ENCODE measurements at regions of chr16 and their contacts with region 1.

Region 1: GRCh38 chr16:71564155-71564967 is 12.5 kb downstream of the TAT start:
- DNase-seq: no peak
- ATAC-seq: no peak
- H3K4me3 Mint-ChIP-seq: peak overlapping the region; percentile 87
- H3K27ac Mint-ChIP-seq: peak overlapping the region; percentile 98
- H3K4me1 Mint-ChIP-seq: peaks cover 15% of the 10 kb centered on the region
- H3K27me3 Mint-ChIP-seq: no peaks in the 10 kb centered on the region

Region 2: GRCh38 chr16:71288890-71289733 is 275.2 kb before region 1 on chr16 and contains the start of gene CMTR2:
- CTCF ChIA-PET with region 1: no interaction called
- POLR2A ChIA-PET with region 1: no interaction called
- intact Hi-C with region 1: loop called in 1 of 2 experiments (anchors 2 kb)
- DNase-seq: peak; percentile 95
- ATAC-seq: peak; percentile 97
- H3K4me3 Mint-ChIP-seq: peak within 1 kb of the TSS; percentile 83
- H3K27ac Mint-ChIP-seq: peak within 1 kb of the TSS; percentile 90
- H3K4me1 Mint-ChIP-seq: peaks cover 15% of the 10 kb centered on the region
- H3K27me3 Mint-ChIP-seq: peaks cover 16% of the 10 kb centered on the region
- total RNA-seq, gene CMTR2: 15.8 to 16.5 TPM

Region 3: DNA sequence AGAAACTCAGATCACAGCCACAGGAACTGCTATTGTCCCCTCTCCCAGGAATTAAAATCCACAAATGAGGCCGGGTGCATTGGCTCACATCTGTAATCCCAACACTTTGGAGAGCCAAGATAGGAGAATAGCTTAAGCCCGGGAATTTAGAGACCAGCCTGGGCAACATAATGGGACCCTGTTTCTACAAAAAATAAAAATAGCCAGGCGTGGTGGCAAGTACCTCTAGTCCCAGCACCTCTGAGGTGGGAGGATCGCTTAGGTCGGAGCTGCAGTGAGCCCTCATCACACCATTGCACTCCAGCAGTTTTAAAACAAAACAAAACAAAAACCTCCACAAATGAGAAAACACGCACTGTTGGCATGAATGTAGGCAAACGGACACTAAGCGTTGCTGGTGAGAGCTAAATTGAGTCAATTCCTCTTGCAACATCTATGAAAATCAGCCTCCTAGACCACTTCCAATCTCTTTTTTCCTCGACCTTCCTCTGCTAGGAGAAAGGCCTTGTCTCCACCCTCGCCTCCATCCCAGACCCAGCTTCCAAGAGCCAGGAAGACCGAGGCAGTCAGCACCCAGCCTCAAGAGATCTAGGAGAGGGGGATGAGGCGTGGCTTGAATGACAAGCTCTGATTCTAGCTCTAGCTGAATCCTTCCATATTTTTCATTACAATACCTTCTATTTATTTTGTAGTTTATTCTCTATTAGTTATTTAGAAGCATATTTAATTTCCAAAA is 137.3 kb before region 1 on chr16:
- CTCF ChIA-PET with region 1: no interaction called
- POLR2A ChIA-PET with region 1: no interaction called
- intact Hi-C with region 1: no loop called
- DNase-seq: no peak
- ATAC-seq: no peak
- H3K4me3 Mint-ChIP-seq: no peak overlapping the region
- H3K27ac Mint-ChIP-seq: no peak overlapping the region
- H3K4me1 Mint-ChIP-seq: no peaks in the 10 kb centered on the region
- H3K27me3 Mint-ChIP-seq: peaks cover 39% of the 10 kb centered on the region

Region 4: DNA sequence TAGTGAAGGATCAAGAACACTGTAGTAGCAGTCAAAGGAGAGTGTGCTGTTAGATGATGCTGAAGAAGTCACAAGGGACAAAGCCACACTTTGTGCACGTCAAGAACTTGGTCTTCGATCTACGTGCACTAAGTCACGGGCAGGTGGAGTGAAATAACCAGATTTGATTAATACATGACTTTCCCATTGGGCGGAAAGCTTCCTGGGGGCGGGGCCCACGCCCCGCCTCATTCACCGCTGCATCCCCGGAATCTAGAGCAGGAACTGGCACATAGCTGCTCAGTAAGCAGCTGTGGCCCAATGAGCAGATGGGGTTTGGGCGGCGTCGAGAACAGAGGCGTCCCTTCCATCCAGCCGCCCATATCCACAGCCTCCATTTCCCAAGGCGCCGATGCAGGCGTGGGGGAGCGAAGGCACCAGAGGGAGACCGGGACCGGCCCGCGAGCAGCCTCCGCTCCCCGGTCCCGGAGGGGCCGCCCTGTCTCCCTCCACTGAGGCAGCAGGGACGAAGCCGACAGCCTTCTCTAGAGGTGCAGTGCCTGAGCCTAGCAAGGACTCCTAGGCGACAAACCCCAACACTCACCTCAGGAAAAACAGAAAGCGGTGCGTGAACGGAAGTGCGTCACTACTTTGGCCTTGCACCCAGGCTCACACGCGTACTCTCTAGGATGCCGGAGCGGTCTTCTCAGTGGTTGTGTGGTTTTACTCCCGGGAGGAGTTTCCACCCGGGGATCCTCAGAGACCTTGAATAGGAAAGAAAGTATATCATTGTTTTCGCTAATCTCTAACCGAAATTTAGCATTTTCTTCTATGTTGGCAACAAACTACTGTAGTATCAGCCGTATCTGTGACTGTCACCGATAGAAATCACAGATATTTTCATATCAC is 80.1 kb before region 1 on chr16:
- CTCF ChIA-PET with region 1: interaction called, 3 read pairs
- POLR2A ChIA-PET with region 1: no interaction called
- intact Hi-C with region 1: loop called in 1 of 2 experiments (anchors 1 kb)
- DNase-seq: peak; percentile 91
- ATAC-seq: peak; percentile 90
- H3K4me3 Mint-ChIP-seq: peak overlapping the region; percentile 75
- H3K27ac Mint-ChIP-seq: peak overlapping the region; percentile 90
- H3K4me1 Mint-ChIP-seq: peaks cover 14% of the 10 kb centered on the region
- H3K27me3 Mint-ChIP-seq: peaks cover 3% of the 10 kb centered on the region

Region 5: GRCh38 chr16:71590584-71590983 is 26.2 kb after region 1 on chr16:
- CTCF ChIA-PET with region 1: no interaction called
- POLR2A ChIA-PET with region 1: no interaction called
- intact Hi-C with region 1: no loop called
- DNase-seq: no peak
- ATAC-seq: no peak
- H3K4me3 Mint-ChIP-seq: no peak overlapping the region
- H3K27ac Mint-ChIP-seq: no peak overlapping the region
- H3K4me1 Mint-ChIP-seq: no peaks in the 10 kb centered on the region
- H3K27me3 Mint-ChIP-seq: peaks cover 32% of the 10 kb centered on the region

Region 6: DNA sequence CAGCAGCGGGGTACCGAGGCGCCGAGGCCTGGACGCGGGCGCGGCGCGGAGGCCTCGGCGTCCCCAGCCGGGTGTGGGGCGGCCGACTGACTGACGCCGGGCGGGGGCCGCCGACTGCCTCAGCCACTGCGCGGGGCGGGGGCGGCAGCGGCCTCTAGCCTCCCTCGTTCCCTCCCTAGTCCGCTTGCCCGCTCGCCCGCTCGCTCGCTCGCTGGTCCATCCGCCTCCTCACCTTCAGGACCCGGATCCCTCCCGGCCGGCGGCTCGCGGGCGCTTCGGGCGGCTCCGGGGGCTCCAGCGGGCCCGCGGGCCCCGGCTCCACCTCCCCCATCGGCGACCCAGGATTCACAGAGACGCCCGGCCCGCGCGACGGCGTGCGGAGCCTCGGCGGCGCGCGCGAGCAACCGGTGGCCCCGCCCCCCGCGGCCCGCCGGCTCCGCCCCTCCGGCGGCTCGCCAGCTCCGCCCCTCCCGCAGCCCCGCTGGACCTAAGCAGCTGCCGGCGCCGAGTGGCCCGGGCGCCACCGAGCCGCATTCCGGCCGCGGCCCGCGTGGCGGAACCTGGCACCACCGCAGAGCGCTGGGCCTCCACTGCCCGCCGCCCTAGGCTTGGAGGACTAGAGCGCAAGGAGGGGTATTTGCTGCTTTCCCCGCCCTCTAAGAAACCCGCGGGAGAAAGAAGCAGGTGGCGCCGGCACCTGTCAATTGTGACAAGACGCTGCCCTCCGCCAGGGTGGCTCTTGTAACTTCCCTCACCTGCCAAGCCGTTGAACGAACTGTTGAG is 159.4 kb after region 1 on chr16:
- CTCF ChIA-PET with region 1: no interaction called
- POLR2A ChIA-PET with region 1: no interaction called
- intact Hi-C with region 1: loop called in 1 of 2 experiments (anchors 1 kb)
- DNase-seq: peak; percentile 87
- ATAC-seq: peak; percentile 87
- H3K4me3 Mint-ChIP-seq: peak overlapping the region; percentile 95
- H3K27ac Mint-ChIP-seq: peak overlapping the region; percentile 68
- H3K4me1 Mint-ChIP-seq: peaks cover 16% of the 10 kb centered on the region
- H3K27me3 Mint-ChIP-seq: no peaks in the 10 kb centered on the region

Region 7: DNA sequence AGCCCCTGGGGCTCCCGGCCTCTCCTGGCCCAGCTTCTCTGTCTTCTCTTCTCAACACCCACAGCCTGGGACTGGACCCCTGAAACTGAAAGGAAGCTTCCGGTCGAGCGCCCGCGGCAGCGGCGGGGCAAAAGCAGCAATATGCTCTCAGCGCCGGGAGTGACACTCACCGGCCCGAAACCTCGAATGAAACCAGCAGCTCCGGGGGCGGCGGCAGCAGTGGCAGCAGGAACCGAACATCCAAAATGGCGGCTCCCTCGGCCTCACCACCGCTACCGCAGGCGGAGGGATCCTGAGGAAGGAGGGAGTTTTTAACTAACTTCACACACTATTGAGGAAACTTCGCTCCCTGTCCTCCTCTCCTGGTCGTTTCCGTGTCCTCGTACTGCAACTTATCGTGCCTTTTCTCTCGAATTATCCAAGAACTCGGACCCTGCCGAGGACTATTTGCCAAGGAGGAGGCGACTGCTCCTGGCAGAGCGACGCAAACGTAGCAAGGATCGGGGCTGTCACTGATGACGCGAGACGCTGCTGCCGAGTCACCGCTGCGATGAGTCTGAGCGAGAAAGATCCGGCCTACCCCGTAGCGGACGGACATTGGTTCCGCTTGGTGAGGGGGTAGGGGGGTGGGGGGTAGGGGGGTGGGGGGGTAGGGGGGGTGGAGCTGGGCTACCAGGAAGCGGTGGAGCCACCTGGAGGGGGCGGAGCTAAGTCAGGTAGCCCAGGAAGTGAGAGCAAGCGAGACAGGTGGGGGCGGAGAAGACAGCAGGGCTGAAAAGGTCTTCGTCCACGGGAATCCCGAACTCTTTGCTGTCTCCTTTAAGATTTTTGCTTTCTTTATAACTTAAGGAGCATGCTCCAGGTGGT is 244.5 kb after region 1 on chr16 and contains the start of gene AP1G1:
- CTCF ChIA-PET with region 1: no interaction called
- POLR2A ChIA-PET with region 1: no interaction called
- intact Hi-C with region 1: loop called in 1 of 2 experiments (anchors 10 kb)
- DNase-seq: peak; percentile 96
- ATAC-seq: peak; percentile 92
- H3K4me3 Mint-ChIP-seq: peak within 1 kb of the TSS; percentile 91
- H3K27ac Mint-ChIP-seq: peak within 1 kb of the TSS; percentile 100
- H3K4me1 Mint-ChIP-seq: peaks cover 48% of the 10 kb centered on the region
- H3K27me3 Mint-ChIP-seq: no peaks in the 10 kb centered on the region
- total RNA-seq, gene AP1G1: 65.5 to 68.8 TPM

Region 8: GRCh38 chr16:71894921-71895678 is 330.7 kb after region 1 on chr16 and contains the start of gene IST1:
- CTCF ChIA-PET with region 1: no interaction called
- POLR2A ChIA-PET with region 1: no interaction called
- intact Hi-C with region 1: loop called in 1 of 2 experiments (anchors 1 kb)
- DNase-seq: peak; percentile 99
- ATAC-seq: peak; percentile 92
- H3K4me3 Mint-ChIP-seq: peak within 1 kb of the TSS; percentile 96
- H3K27ac Mint-ChIP-seq: peak within 1 kb of the TSS; percentile 94
- H3K4me1 Mint-ChIP-seq: peaks cover 31% of the 10 kb centered on the region
- H3K27me3 Mint-ChIP-seq: no peaks in the 10 kb centered on the region
- total RNA-seq, gene IST1: 170 to 179 TPM

Region 9: DNA sequence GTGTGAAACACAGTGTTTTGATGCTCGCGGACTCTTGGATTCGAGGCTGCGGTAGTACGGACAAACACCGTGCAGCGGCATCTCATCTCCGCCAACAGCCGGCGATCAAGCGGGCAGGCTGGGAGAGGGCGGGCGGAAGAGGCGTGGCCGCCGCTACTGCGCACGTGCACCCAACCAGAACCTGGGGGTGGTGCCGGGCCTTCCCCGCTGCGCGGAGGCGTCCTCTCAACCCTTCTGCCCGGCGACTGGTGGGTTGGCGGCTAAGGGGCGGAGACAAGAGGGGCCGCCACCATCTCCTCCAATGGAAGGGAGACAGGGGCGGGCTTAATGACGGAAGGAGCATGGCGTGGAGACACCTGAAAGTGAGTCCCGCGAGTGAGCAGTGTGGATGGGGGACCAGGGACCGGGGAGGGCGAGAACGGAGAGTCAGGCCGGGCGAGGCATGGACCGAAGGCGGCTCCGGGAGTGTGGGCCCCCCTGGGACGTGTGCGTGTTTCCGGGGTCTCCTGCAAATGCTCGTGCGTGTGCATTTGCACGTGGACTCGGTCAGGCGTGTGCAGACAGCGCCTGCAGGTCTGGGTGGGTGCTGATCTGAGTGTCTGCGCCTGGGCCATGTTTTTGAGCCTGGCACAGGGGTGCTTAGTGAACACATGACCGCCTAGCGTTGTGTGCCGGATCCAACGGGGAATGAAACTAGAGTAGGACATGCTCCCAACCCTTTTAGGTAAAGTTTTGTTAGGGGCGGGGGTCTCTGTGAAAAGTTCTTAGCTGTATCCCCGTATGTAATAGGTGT is 444.3 kb after region 1 on chr16 and contains the start of gene DHODH:
- CTCF ChIA-PET with region 1: no interaction called
- POLR2A ChIA-PET with region 1: no interaction called
- intact Hi-C with region 1: loop called in 1 of 2 experiments (anchors 1 kb)
- DNase-seq: peak; percentile 99
- ATAC-seq: peak; percentile 99
- H3K4me3 Mint-ChIP-seq: peak within 1 kb of the TSS; percentile 94
- H3K27ac Mint-ChIP-seq: peak within 1 kb of the TSS; percentile 96
- H3K4me1 Mint-ChIP-seq: peaks cover 21% of the 10 kb centered on the region
- H3K27me3 Mint-ChIP-seq: no peaks in the 10 kb centered on the region
- total RNA-seq, gene DHODH: 15.5 to 21.4 TPM

Region 10: GRCh38 chr16:72162105-72162692 is 597.8 kb after region 1 on chr16:
- CTCF ChIA-PET with region 1: no interaction called
- POLR2A ChIA-PET with region 1: no interaction called
- intact Hi-C with region 1: no loop called
- DNase-seq: no peak
- ATAC-seq: no peak
- H3K4me3 Mint-ChIP-seq: no peak overlapping the region
- H3K27ac Mint-ChIP-seq: no peak overlapping the region
- H3K4me1 Mint-ChIP-seq: no peaks in the 10 kb centered on the region
- H3K27me3 Mint-ChIP-seq: peaks cover 3% of the 10 kb centered on the region

Region 11: GRCh38 chr16:73546349-73546845 is 1982.0 kb after region 1 on chr16:
- CTCF ChIA-PET with region 1: no interaction called
- POLR2A ChIA-PET with region 1: no interaction called
- intact Hi-C with region 1: no loop called
- DNase-seq: no peak
- ATAC-seq: no peak
- H3K4me3 Mint-ChIP-seq: no peak overlapping the region
- H3K27ac Mint-ChIP-seq: no peak overlapping the region
- H3K4me1 Mint-ChIP-seq: no peaks in the 10 kb centered on the region
- H3K27me3 Mint-ChIP-seq: peaks cover 44% of the 10 kb centered on the region